ENCODE measurements at regions of chr20 and their contacts with region 1.

Region 1: DNA sequence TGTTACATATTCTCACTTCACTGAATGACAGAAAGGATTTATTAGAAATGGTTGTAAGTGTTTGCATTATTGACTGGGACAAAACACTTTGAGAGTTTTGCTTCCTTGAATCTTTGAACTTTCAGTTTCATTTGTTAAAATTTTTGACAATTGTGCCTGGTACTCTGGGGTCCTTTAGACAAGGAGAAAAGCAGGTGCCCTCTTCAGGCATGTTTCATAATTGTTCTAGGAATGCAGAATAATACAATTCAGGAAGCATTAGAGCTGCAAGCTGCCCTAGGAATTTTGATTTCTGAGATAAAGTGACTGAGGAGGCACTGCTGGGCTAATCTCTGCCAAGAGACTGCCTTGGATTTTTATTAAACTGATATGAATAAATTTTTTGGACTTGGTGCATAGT is 49.7 kb downstream of the TOP1 start:
- DNase-seq: peak; percentile 77
- ATAC-seq: peak; percentile 91
- H3K4me3 ChIP-seq: no peak overlapping the region
- H3K27ac ChIP-seq: no peak overlapping the region
- H3K4me1 ChIP-seq: peaks cover 12% of the 10 kb centered on the region
- H3K27me3 ChIP-seq: no peaks in the 10 kb centered on the region
- CTCF ChIP-seq: peak; percentile 59
- EP300 ChIP-seq: no peak
- POLR2A ChIP-seq: no peak
- RAD21 ChIP-seq: peak; percentile 71

Region 2: GRCh38 chr20:40970201-40970600 is 108.1 kb before region 1 on chr20:
- CTCF ChIA-PET with region 1: interaction called, 37 read pairs
- POLR2A ChIA-PET with region 1: no interaction called
- in situ Hi-C with region 1: no loop called
- intact Hi-C with region 1: loop called (anchors 1 kb)
- DNase-seq: no peak
- ATAC-seq: no peak
- H3K4me3 ChIP-seq: no peak overlapping the region
- H3K27ac ChIP-seq: no peak overlapping the region
- H3K4me1 ChIP-seq: peaks cover 25% of the 10 kb centered on the region
- H3K27me3 ChIP-seq: peaks cover 4 to 8% of the 10 kb centered on the region in 2 experiments; a peak in 2 of 5 replicates
- CTCF ChIP-seq: 0 out of 2 replicates have a peak, but pooled peaks have one; percentile 21
- EP300 ChIP-seq: no peak
- POLR2A ChIP-seq: no peak
- RAD21 ChIP-seq: no peak

Region 3: DNA sequence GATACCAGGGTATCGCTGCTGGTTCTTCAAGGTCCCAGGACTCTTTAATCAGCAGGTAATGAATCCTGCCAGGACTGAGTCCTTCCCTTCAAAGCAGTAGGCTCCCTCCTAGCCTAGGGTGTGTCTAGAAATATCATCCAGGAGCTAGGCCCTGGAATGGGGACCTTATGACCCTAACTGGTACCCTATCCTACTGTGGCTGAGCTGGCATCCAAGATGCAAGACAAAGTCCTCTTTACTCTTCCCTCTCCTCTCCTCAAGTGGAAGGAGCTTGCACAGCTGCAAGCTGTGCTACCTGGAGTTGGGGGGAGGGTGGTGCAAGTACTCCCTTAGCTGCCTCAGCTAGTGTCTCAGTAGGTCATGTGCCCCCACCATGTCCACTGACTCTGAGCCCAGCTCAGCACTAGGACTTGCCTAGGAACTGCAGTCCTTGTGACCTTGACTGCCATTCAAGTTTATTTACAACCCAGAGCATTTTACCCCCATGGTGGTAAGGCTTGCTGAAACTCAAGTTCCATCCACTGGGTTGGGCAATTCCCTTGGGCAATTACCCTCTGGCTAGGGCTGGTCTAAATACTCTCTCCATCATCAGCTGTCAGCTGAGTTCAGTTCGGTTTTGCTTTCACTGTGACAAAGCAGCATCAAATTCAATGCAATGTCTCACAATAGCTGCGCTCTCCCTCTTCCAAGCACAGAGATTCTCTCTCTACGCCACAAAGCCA is 98.1 kb before region 1 on chr20:
- CTCF ChIA-PET with region 1: no interaction called
- POLR2A ChIA-PET with region 1: no interaction called
- in situ Hi-C with region 1: no loop called
- intact Hi-C with region 1: no loop called
- DNase-seq: no peak
- ATAC-seq: peak; percentile 45
- H3K4me3 ChIP-seq: no peak overlapping the region
- H3K27ac ChIP-seq: no peak overlapping the region
- H3K4me1 ChIP-seq: no peaks in the 10 kb centered on the region
- H3K27me3 ChIP-seq: no peaks in the 10 kb centered on the region
- CTCF ChIP-seq: no peak
- EP300 ChIP-seq: no peak
- POLR2A ChIP-seq: no peak
- RAD21 ChIP-seq: no peak

Region 4: DNA sequence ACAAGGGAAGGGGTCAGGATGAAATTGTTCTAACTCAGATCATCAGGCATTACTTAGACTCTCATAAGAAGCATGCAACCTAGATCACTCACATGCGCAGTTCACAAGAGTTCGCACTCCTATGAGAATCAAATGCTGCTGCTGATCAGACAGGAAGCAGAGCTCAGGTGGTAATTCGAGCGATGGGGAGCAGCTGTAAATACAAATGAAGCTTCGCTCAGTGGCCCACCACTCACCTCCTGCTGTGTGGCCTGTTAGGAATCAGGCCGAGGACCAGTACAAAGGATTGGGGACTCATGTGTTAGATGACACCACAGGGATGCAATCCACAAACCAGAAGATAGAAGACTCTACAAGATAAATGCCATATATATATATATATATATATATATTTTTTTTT is 81.2 kb before region 1 on chr20:
- CTCF ChIA-PET with region 1: no interaction called
- POLR2A ChIA-PET with region 1: no interaction called
- in situ Hi-C with region 1: loop called (anchors 5 kb)
- intact Hi-C with region 1: no loop called
- DNase-seq: no peak
- ATAC-seq: no peak
- H3K4me3 ChIP-seq: no peak overlapping the region
- H3K27ac ChIP-seq: no peak overlapping the region
- H3K4me1 ChIP-seq: peaks cover 28% of the 10 kb centered on the region
- H3K27me3 ChIP-seq: no peaks in the 10 kb centered on the region
- CTCF ChIP-seq: no peak
- EP300 ChIP-seq: no peak
- POLR2A ChIP-seq: no peak
- RAD21 ChIP-seq: no peak

Region 5: DNA sequence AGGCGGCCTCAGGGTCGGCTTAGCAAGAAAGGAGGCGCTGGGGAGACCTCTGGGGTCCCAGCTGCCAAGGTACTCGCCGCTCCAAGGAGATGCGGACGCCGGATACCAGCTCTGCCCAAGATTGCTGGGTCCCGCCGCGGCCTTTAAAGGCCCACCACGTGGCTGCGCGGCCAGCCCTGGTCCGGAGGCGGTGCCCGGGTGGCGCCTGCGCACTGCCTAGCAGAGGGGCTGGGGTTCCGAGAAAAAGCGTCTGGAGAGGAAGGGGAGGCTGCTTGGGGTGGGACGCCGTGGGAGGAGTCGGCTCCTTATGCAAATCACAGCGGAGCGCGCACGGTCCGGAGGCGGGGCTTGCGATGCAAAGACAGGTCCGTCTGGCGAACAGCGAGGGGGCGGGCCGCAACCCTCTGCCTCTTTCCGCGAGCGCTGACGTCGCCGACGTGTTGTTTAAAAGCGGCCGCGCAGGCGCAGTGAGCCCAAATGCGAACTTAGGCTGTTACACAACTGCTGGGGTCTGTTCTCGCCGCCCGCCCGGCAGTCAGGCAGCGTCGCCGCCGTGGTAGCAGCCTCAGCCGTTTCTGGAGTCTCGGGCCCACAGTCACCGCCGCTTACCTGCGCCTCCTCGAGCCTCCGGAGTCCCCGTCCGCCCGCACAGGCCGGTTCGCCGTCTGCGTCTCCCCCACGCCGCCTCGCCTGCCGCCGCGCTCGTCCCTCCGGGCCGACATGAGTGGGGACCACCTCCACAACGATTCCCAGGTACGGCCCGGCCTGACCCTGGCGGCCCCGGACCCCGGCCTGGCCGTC is 49.8 kb before region 1 on chr20 and contains the start of gene TOP1:
- CTCF ChIA-PET with region 1: no interaction called
- POLR2A ChIA-PET with region 1: no interaction called
- in situ Hi-C with region 1: no loop called
- intact Hi-C with region 1: loop called (anchors 2 kb)
- DNase-seq: peak; percentile 100
- ATAC-seq: peak; percentile 94
- H3K4me3 ChIP-seq: peak within 1 kb of the TSS; percentile 91 to 95 (median 95)
- H3K27ac ChIP-seq: peak within 1 kb of the TSS; percentile 82
- H3K4me1 ChIP-seq: peaks cover 53% of the 10 kb centered on the region
- H3K27me3 ChIP-seq: peaks cover 2 to 4% of the 10 kb centered on the region in 2 experiments; a peak in 2 of 5 replicates
- CTCF ChIP-seq: peak; percentile 2; the same call in 1 of the 2 replicates
- EP300 ChIP-seq: peak; percentile 15 to 79; a peak in 2 of 4 replicates
- POLR2A ChIP-seq: peak; percentile 98 to 99
- RAD21 ChIP-seq: peak; percentile 71
- total RNA-seq, gene TOP1: 19.4 and 75.3 TPM in 2 replicates

Region 6: GRCh38 chr20:41038878-41039404 is 39.4 kb before region 1 on chr20:
- CTCF ChIA-PET with region 1: no interaction called
- POLR2A ChIA-PET with region 1: no interaction called
- in situ Hi-C with region 1: no loop called
- intact Hi-C with region 1: loop called (anchors 2 kb)
- DNase-seq: peak; percentile 99
- ATAC-seq: peak; percentile 98
- H3K4me3 ChIP-seq: peak overlapping the region; percentile 26 to 57 (median 39); a peak in 5 of 6 replicates
- H3K27ac ChIP-seq: peak overlapping the region; percentile 84
- H3K4me1 ChIP-seq: peaks cover 93% of the 10 kb centered on the region
- H3K27me3 ChIP-seq: no peaks in the 10 kb centered on the region
- CTCF ChIP-seq: no peak
- EP300 ChIP-seq: peak; percentile 56 to 83; a peak in 3 of 4 replicates
- POLR2A ChIP-seq: peak; percentile 34 to 74; a peak in 3 of 4 replicates
- RAD21 ChIP-seq: no peak